ENCODE measurements at regions of chr10 and their contacts with region 1.

Region 1: DNA sequence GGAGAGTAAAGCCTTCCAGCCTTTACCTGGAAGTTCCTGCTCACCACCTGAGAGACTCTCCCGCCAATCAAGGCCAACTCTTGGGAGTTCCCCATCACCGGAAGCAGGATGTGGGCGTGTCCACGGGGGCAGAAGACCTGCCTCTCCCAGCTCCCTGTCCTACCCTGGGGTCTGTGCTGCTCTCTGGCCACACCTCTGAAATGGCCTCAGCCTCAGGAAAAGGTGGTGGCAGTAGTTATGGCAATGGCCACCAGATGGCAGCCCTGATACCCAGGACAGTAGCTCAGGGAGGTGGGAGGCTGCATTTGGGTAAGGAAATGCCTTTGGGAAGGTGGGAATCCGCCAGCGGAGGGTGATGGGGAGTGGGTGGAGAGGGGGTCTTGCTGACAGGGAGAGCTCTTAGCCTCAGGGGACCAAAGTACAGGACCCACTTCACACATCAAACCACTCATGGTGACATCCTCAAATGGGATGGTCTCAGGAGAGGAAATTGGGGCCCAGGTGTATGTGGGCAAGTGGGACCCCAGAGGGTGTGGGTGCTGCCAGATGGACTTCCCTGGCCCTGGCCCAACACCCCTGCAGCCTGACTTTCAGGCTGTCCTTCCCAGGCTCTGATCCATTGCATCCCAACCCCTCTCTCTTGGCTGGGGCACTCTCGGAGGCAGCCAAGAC is 33.9 kb downstream of the KAZALD1 start:
- DNase-seq: peak; percentile 66
- ATAC-seq: peak; percentile 85
- H3K4me3 ChIP-seq: no peak overlapping the region
- H3K27ac ChIP-seq: no peak overlapping the region
- H3K4me1 ChIP-seq: peaks cover 22% of the 10 kb centered on the region
- H3K27me3 ChIP-seq: peaks cover 7 to 65% of the 10 kb centered on the region in 2 experiments; a peak in 4 of 5 replicates
- CTCF ChIP-seq: peak; percentile 97
- EP300 ChIP-seq: 0 out of 4 replicates have a peak, but pooled peaks of 1 of the 2 experiments have one; percentile 9
- POLR2A ChIP-seq: no peak
- RAD21 ChIP-seq: peak; percentile 89

Region 2: DNA sequence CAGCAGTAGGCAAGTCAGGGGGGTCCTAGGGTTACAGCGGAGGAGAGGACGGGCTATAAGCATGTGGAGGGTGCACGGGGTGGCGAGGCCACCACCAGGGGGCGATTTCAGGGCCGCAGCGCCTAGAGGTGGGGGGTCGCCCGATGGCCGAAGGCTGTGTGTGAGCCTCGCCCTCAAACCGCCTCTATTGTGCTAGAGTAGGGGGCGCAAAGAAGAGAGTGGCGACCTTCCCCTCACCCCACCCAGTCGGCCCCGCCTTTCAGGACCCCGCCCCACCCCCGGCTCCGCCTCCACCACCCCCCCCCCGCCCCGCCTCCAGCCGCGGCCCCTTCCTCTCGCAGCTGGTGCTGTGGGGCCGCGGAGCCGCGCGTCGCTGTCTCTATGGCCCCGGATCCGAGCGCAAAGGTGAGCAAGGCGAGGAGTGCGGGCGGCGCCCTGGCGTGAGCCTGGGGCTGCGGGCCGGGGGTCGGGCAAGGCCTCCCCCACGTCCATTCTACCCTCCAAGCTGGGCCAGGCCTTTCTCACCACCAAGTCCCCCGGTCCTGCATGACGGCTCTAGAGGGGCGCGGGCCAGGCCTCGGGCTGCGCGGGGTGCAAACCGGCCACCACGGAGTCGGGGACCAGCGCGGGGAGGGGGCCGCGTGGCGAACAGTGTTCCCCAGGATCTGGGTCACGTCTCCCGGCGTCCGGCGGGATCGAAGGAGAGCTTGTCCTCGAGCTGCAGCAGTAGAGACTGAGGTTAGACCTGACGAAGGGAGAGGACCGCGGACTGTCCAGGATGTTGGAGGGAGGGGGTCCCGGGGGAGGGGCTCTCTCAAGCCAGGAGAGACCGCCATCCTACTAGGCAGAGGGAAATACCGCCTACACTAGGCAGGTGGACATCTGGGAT is 126.2 kb before region 1 on chr10 and contains the start of gene SEMA4G:
- CTCF ChIA-PET with region 1: no interaction called
- POLR2A ChIA-PET with region 1: no interaction called
- in situ Hi-C with region 1: no loop called
- intact Hi-C with region 1: no loop called
- DNase-seq: peak; percentile 80
- ATAC-seq: peak; percentile 69
- H3K4me3 ChIP-seq: peak within 1 kb of the TSS; percentile 84 to 96 (median 94)
- H3K27ac ChIP-seq: peak within 1 kb of the TSS; percentile 96
- H3K4me1 ChIP-seq: peaks cover 88% of the 10 kb centered on the region
- H3K27me3 ChIP-seq: no peaks in the 10 kb centered on the region; a peak in 1 of 5 replicates
- CTCF ChIP-seq: peak; percentile 87
- EP300 ChIP-seq: 0 out of 4 replicates have a peak, but pooled peaks of 1 of the 2 experiments have one; percentile 23
- POLR2A ChIP-seq: peak; percentile 52 to 61; a peak in 3 of 4 replicates
- RAD21 ChIP-seq: peak; percentile 70
- total RNA-seq, gene SEMA4G: 42.9 and 46.2 TPM in 2 replicates

Region 3: DNA sequence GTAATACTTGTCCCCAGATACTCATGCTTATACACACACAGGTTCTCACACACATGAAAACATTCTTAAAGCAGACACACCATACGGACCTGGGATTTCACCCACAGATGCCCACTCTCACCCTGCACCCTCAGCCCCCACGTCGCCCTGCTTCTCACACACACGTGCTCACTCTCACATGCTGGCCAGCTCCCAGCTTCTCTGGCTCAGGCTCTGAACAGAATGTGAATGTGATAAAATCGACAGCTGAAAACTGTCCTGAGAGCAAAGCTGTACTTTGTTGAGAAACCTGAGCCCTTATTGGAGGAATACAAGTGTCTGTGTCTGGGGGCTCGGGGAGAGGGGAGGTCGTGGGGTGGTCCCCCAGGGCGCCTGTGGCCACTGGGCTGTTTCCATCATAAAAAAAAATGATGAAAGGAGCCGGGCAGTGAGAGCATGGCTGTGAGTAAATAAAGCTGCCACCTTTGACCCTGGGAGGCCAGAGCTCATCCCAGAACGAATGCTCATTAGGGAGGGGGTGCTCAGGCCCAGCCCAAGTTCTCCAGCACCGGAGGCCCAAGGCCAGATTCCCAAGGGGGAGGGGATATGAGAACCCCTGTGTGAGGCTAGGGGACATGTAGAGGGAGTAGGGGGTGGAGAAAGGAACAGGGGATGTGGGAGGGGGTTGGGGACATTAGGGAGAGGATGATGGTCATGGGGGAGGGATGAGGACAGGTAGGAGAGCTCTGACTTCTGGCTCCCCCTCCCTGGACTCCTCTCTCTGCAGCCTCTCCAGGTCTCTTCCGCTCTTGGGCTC is 17.3 kb after region 1 on chr10:
- CTCF ChIA-PET with region 1: no interaction called
- POLR2A ChIA-PET with region 1: interaction called, 13 read pairs
- in situ Hi-C with region 1: no loop called
- intact Hi-C with region 1: no loop called
- DNase-seq: peak; percentile 85
- ATAC-seq: peak; percentile 89
- H3K4me3 ChIP-seq: peak overlapping the region in 1 of 3 experiments; percentile 48; a peak in 1 of 6 replicates
- H3K27ac ChIP-seq: peak overlapping the region; percentile 68
- H3K4me1 ChIP-seq: peaks cover 40% of the 10 kb centered on the region
- H3K27me3 ChIP-seq: peaks cover 0 to 12% of the 10 kb centered on the region in 2 experiments; a peak in 1 of 5 replicates
- CTCF ChIP-seq: no peak
- EP300 ChIP-seq: peak in 1 of 2 experiments; percentile 76; a peak in 2 of 4 replicates
- POLR2A ChIP-seq: no peak
- RAD21 ChIP-seq: no peak

Region 4: DNA sequence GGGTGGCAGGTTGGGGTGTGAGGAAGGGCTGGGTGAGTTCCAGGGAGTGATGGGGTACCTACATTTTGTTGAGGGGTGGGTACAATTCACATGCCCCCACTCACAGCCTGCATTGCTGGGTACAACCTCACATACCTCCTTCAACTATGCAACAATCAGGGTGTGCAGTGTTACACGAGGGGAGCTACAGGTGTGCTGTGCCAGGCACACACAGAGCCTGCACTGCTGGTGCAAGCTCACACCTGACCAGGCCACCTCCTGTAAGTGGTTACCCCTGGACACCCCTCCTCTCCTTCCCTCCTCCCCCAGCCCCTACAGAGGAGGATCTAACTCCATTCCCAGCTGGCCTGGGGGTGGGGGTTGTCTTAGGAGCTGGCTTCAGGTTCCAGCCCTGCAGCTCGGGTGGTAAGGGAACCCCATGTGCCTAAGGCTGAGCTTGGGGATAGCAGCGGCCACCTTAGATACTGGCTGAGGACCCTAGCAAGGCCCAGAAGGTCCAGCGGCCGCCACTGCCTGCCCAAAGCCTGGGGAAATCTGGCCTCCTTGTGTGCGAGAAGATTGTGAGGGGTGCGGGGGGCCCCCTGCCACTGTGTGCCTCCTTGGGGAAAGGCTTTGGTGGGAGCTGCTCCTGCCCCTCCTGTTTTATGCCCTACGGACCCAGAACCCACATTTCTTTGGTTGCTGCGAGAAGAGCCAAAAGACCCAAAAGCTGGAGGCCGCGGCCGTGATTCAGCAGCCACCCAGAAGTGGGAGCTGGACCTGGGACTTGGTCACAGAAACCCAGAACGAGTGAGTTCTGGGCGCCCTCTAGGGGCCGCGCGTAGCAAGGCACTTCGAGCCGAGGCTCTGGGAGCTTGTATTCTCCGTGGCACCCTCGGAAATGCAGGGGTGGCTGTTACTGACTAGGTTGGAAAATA is 46.2 kb after region 1 on chr10:
- CTCF ChIA-PET with region 1: interaction called, 65 read pairs
- POLR2A ChIA-PET with region 1: interaction called, 17 read pairs
- in situ Hi-C with region 1: loop called (anchors 5 kb)
- intact Hi-C with region 1: loop called (anchors 1 kb)
- DNase-seq: peak; percentile 71
- ATAC-seq: peak; percentile 90
- H3K4me3 ChIP-seq: peak overlapping the region; percentile 27 to 71 (median 52)
- H3K27ac ChIP-seq: no peak overlapping the region
- H3K4me1 ChIP-seq: peaks cover 24% of the 10 kb centered on the region
- H3K27me3 ChIP-seq: peaks cover 12 to 66% of the 10 kb centered on the region in 2 experiments
- CTCF ChIP-seq: peak; percentile 95
- EP300 ChIP-seq: no peak
- POLR2A ChIP-seq: no peak
- RAD21 ChIP-seq: peak; percentile 95

Measured in HepG2 (cell line).